Activated T-helper 2 cell treated with anti-CD3 and anti-CD28 coated beads, Interferon-gamma antibody, Interleukin-2, Interleukin-4, amounts not matched to agents 10 μg/mL and 5 μg/mL and 100 μg/mL, durations not matched to agents 14 hours and 24 hours and 36 hours (primary cell): ENCODE measurements at regions of chr1 and their contacts with region 1.

Region 1: GRCh38 chr1:111222308-111223125 is 5.0 kb upstream of the CHI3L2 start:
- DNase-seq: peak; percentile 70
- H3K4me3 Mint-ChIP-seq: peak overlapping the region; percentile 78
- H3K27ac Mint-ChIP-seq: peak overlapping the region; percentile 93
- H3K4me1 Mint-ChIP-seq: peaks cover 84% of the 10 kb centered on the region
- H3K27me3 Mint-ChIP-seq: no peaks in the 10 kb centered on the region

Region 2: DNA sequence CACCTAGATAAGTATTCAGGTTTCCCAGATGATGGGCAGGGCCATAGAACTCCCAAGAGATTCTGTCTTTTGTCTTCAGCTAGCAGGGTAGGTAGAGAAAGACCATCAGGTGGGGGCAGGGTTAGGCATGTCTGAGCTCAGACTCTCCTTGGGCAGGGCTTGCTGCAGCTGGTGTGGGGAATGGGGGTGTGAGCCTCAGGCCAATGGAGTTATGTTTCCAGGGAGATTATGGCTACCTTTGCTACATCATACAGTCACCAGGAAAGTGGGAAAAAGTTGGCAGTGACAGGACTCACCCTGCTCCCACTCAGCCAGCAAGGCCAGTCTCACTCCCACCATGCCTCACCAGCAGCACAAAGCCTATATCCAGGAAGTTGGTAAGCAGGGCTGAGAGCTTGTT is 160.4 kb before region 1 on chr1:
- intact Hi-C with region 1: no loop called
- DNase-seq: no peak
- H3K4me3 Mint-ChIP-seq: no peak overlapping the region
- H3K27ac Mint-ChIP-seq: no peak overlapping the region
- H3K4me1 Mint-ChIP-seq: no peaks in the 10 kb centered on the region
- H3K27me3 Mint-ChIP-seq: peaks cover 4% of the 10 kb centered on the region

Region 3: DNA sequence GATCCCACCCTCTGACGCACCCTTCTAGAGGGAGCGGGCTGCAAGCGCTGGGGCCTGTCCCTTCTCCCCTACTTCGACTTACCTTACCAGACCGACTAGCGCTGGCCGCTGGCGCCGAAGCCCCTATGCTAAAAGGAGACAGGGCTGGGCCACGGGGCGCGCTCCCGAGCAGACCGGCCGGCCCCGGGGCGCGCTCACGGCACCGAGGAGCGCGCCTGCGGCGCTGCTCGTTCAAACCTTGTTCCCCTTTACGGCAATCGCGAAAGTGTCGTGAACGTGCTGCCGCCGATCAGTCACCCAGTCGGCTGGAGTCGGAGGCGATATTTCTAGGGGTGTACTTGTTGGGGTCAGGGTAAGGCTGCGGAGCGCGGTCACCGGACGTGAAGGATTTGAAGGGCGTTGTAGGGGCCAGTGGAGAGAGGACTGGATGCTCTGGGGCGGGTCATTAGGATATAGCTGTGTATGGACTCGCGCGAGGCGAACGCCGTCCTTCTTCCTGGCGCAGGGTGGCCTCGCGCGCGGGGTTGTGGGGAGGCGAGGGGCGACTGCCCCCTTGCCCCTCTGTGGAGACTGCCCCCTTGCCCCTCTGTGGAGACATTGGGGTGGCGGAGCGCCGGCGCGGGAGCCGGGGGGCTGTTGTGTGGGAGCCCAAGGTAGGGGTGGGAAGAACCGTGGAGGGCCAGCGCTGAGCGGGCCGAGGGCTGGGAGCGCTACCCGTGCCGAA is 82.4 kb before region 1 on chr1 and contains the starts of genes CEPT1 and DRAM2:
- intact Hi-C with region 1: loop called (anchors 2 kb)
- DNase-seq: peak; percentile 91
- H3K4me3 Mint-ChIP-seq: peak within 1 kb of the TSS; percentile 96
- H3K27ac Mint-ChIP-seq: peak within 1 kb of the TSS; percentile 92
- H3K4me1 Mint-ChIP-seq: peaks cover 36% of the 10 kb centered on the region
- H3K27me3 Mint-ChIP-seq: no peaks in the 10 kb centered on the region
- total RNA-seq, gene CEPT1: 29.8 and 34.8 TPM in 2 replicates
- total RNA-seq, gene DRAM2: 22.9 and 24.7 TPM in 2 replicates

Region 4: DNA sequence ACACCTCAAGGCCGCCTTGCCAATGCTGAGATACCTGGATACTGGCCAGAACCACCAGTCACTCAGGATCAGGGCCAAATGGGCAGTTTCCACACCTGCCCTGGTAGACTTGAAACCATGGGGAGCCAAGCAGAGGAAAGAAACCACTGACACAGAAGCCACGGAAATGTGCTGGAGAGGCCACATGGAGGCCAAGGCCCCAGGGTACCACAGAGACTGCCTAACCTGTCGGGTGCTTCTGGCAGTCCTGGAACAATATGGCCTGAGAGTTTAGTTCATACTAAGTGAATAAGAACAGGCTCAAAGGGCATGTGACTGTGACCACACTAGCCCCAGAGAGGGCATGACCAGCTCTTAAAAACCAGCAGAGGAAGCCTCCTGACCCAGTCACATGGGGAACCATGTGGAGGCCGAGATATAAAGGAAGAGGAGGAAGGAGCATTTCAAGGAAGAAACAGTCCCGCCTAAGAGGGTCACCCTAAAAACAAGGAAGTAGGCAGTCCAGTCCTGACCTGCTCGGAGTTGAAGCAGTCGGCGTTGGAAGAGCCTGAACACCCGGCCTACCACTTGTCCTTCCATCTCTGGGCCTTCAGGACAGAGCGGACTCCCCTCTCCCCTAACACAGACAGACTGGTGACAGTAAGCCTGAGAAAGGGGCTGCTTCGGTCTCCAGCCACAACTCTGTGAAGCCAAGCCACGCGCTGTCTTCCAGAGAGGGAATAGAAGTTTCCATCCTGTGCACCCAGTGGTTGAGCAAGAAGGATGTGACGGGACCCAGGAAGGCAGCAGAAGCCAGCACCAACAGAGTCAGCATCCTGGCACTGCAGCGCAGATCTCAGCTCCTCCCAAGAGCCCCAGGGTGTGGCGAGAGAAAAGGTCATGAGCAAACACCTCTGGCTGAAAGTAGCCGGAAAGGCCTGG is 22.4 kb before region 1 on chr1 and contains the start of gene DENND2D:
- intact Hi-C with region 1: no loop called
- DNase-seq: peak; percentile 55
- H3K4me3 Mint-ChIP-seq: peak within 1 kb of the TSS; percentile 98
- H3K27ac Mint-ChIP-seq: peak within 1 kb of the TSS; percentile 97
- H3K4me1 Mint-ChIP-seq: peaks cover 70% of the 10 kb centered on the region
- H3K27me3 Mint-ChIP-seq: no peaks in the 10 kb centered on the region
- total RNA-seq, gene DENND2D: 139 and 143 TPM in 2 replicates

Region 5: GRCh38 chr1:111334169-111334568 is 111.7 kb after region 1 on chr1:
- intact Hi-C with region 1: loop called (anchors 1 kb)
- DNase-seq: no peak
- H3K4me3 Mint-ChIP-seq: no peak overlapping the region
- H3K27ac Mint-ChIP-seq: no peak overlapping the region
- H3K4me1 Mint-ChIP-seq: no peaks in the 10 kb centered on the region
- H3K27me3 Mint-ChIP-seq: no peaks in the 10 kb centered on the region

Region 6: DNA sequence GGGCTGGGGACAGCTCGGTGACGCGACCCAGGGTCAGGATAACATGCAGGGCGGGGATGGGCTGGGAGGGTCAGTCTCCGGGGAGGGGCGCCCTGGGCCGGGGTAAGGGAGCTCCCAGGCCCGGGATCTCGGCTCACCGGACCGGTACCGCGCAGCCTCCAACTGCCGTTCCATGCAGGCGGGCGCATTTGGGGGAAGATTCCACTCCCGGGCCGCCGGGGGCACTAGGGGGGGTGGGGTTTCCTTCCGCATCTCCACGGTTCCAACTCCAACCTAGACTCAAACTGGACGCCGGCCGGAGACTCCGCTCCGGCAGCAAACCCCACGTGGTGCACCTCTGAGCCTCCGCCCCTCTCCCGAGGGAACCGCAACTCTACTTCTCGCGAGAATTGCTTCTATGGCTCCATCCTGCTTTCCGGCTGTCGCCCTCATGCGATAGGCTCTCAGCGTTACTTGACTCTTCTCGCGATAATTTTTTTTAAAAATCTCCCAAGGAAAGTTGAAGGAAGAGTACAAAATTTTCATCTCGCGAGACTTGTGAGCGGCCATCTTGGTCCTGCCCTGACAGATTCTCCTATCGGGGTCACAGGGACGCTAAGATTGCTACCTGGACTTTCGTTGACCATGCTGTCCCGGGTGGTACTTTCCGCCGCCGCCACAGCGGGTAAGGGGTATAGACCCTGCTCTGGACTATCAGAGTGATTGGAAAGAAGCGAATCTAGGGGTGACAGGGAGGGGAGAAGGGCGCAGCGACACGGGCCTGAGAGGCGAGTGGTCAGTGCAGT is 226.6 kb after region 1 on chr1 and contains the starts of genes ATP5PB and WDR77:
- intact Hi-C with region 1: loop called (anchors 2 kb)
- DNase-seq: peak; percentile 91
- H3K4me3 Mint-ChIP-seq: peak within 1 kb of the TSS; percentile 100
- H3K27ac Mint-ChIP-seq: peak within 1 kb of the TSS; percentile 96
- H3K4me1 Mint-ChIP-seq: peaks cover 52% of the 10 kb centered on the region
- H3K27me3 Mint-ChIP-seq: no peaks in the 10 kb centered on the region
- total RNA-seq, gene ATP5PB: 294 and 308 TPM in 2 replicates
- total RNA-seq, gene WDR77: 46.5 and 52.6 TPM in 2 replicates